ENCODE measurements at regions of chr13 and their contacts with region 1.

Region 1: DNA sequence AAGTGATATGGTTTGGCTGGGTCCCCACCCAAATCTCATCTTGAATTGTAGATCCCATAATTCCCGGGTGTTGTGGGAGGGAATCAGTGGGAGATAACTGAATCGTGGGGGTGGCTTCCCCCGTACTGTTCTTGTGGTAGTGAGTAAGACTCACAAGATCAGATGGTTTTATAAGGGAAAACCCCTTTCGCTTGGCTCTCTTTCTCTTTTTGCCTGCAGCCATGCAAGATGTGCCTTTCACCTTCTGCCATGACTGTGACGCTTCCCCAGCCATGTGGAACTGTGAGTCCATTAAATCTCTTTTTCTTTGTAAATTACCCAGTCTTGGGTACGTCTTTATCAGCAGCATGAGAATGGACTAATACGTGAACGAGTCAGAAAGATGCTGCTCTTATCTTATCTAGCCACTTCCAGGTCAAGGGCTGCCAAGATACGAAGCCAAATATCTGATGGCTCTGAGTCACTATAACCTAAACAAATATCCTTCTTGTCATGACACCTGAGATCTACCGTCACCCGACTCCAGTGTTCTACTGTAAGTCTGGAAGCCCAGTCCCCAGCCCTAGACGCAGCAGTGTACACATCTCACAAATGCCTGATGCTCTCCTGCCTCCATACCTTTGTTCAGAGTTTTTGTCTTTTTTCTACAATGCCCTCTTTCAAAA is 45.9 kb downstream of the SLC15A1 start:
- DNase-seq: peak; percentile 70 to 84
- H3K4me3 ChIP-seq: no peak overlapping the region
- H3K4me3 Mint-ChIP-seq: peak overlapping the region; percentile 8
- H3K27ac Mint-ChIP-seq: peak overlapping the region; percentile 14
- H3K4me1 ChIP-seq: peaks cover 14% of the 10 kb centered on the region
- H3K4me1 Mint-ChIP-seq: peaks cover 12% of the 10 kb centered on the region
- H3K27me3 ChIP-seq: no peaks in the 10 kb centered on the region
- H3K27me3 Mint-ChIP-seq: no peaks in the 10 kb centered on the region
- CTCF ChIP-seq: no peak

Region 2: GRCh38 chr13:98731925-98732324 is 25.3 kb after region 1 on chr13:
- CTCF ChIA-PET with region 1: interaction called, 3 read pairs
- POLR2A ChIA-PET with region 1: no interaction called
- intact Hi-C with region 1: loop called (anchors 2 kb)
- DNase-seq: peak in 1 of 2 experiments; percentile 41
- H3K4me3 ChIP-seq: no peak overlapping the region
- H3K4me3 Mint-ChIP-seq: no peak overlapping the region
- H3K27ac Mint-ChIP-seq: no peak overlapping the region
- H3K4me1 ChIP-seq: peaks cover 17% of the 10 kb centered on the region
- H3K4me1 Mint-ChIP-seq: peaks cover 7% of the 10 kb centered on the region
- H3K27me3 ChIP-seq: no peaks in the 10 kb centered on the region
- H3K27me3 Mint-ChIP-seq: no peaks in the 10 kb centered on the region
- CTCF ChIP-seq: no peak

Region 3: DNA sequence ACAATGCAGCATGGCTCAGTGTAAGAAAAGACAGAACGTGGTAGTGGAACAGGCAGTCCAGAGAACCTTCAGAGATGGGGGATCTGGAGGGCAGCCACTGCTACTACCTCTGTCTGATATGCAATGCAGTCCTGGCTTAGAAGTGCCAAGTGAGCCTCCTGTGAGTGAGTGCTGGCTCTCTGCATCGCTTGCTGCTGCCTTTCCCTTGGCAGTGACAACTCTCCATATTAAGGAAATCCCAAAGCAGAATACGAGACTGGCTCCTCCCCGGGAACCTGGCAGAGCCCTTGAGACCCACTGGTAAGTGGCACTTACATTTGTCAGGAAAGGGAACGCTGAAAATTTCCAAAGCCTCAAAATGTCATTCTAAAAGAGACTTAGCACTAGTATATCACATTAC is 263.8 kb after region 1 on chr13:
- CTCF ChIA-PET with region 1: no interaction called
- POLR2A ChIA-PET with region 1: no interaction called
- intact Hi-C with region 1: no loop called
- DNase-seq: no peak
- H3K4me3 ChIP-seq: no peak overlapping the region
- H3K4me3 Mint-ChIP-seq: no peak overlapping the region
- H3K27ac Mint-ChIP-seq: no peak overlapping the region
- H3K4me1 ChIP-seq: peaks cover 46% of the 10 kb centered on the region
- H3K4me1 Mint-ChIP-seq: peaks cover 45% of the 10 kb centered on the region
- H3K27me3 ChIP-seq: no peaks in the 10 kb centered on the region
- H3K27me3 Mint-ChIP-seq: no peaks in the 10 kb centered on the region
- CTCF ChIP-seq: no peak

Measured in Caco-2 (cell line).